Heart left ventricle (tissue), 16 donors: ENCODE measurements at regions of chr4 and their contacts with region 1.

Region 1: DNA sequence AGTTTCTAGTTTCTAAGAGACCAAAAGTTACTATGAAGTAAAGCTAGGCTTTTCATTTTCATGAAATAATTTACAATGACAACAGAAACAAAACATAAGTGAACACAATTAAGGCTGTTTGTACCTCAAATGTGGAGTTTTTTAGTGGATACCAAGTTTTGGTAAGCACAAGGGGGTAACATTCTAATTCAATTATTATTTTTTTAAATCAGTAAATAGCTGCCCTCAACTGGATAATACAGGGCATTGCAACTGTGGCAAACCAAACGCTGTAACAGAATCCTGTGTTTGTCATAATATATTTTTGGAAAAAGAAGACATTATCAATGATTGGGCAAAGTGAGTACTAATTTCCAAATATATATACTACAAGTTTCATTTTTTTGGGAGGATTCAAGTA is 150.3 kb downstream of the FBXW7 start:
- DNase-seq: no peak
- ATAC-seq: peak in 1 of 4 donors; percentile 18
- H3K4me3 ChIP-seq: no peak overlapping the region
- H3K27ac ChIP-seq: no peak overlapping the region
- H3K4me1 ChIP-seq: peaks cover 0 to 21% (median 5%) of the 10 kb centered on the region in 12 donors
- H3K27me3 ChIP-seq: no peaks in the 10 kb centered on the region
- CTCF ChIP-seq: peak; percentile 40 to 83 (median 69)
- POLR2A ChIP-seq: no peak

Region 2: GRCh38 chr4:151117371-151117962 is 1268.1 kb before region 1 on chr4:
- intact Hi-C with region 1: loop called in 2 of 10 experiments (anchors 10 kb)
- DNase-seq: peak in 3 of 5 donors; percentile 48 to 54 (median 52)
- ATAC-seq: peak; percentile 41 to 59 (median 53)
- H3K4me3 ChIP-seq: no peak overlapping the region
- H3K27ac ChIP-seq: peak overlapping the region in 5 of 12 donors; percentile 10 to 48 (median 28)
- H3K4me1 ChIP-seq: peaks cover 0 to 13% (median 0%) of the 10 kb centered on the region in 12 donors
- H3K27me3 ChIP-seq: no peaks in the 10 kb centered on the region
- CTCF ChIP-seq: peak; percentile 62 to 85 (median 74)
- POLR2A ChIP-seq: no peak

Region 3: DNA sequence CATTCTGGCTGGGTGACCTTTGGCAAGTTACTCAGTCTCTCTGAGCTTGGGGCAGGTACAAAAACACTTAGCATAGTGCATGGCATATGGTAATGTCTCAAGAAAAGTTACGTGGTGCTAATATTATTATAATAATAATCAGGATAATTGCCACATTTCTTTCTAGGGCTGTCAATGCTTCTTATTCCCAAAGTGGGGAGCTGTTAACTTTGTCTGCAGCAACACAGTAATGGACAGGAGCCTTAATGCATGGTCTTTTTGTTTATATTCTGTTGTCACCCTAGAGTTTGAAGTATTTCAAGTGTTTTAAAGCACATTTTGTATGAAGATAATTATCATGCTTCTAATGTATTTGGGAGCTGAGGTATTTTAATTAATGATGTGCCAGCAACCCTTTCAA is 854.8 kb before region 1 on chr4:
- intact Hi-C with region 1: loop called in 2 of 10 experiments (anchors 10 kb)
- DNase-seq: no peak
- ATAC-seq: no peak
- H3K4me3 ChIP-seq: no peak overlapping the region
- H3K27ac ChIP-seq: no peak overlapping the region
- H3K4me1 ChIP-seq: peaks cover 0 to 9% (median 0%) of the 10 kb centered on the region in 12 donors
- H3K27me3 ChIP-seq: no peaks in the 10 kb centered on the region
- CTCF ChIP-seq: peak in 4 of 12 donors; percentile 32 to 42 (median 36)
- POLR2A ChIP-seq: no peak

Region 4: DNA sequence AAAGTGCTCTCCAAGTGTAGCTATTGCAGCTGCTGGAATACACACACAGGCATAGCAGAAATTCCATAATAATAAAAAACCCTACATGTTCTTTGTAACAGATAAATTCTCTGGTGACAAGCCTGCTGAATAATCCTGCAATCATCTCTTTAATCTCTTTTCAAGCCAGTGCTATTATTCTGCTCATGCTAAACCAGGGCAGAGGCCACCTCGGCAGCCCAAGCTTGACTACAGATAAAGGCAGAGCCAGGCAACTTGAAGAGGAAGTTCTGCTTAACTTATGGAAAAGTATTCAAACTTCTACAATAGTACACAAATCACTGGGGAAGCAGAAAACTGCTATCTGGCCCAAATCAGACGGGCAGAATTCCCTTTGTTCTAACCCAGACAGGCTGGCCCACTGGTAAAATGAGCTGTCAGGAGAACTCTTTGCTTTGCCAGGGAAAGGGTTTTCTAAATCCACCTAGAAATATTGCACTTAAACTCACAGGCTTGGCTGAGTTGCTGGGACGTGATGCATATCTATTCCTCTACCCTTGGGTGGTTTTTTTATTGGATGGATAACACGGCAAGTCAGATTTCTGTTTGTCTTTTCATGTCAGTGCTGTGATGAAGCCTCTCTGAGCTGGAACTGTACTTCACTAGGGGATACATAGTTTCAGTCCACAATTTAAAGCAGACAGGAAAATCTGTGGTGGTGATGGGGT is 695.2 kb before region 1 on chr4:
- intact Hi-C with region 1: loop called in 1 of 10 experiments (anchors 10 kb)
- DNase-seq: no peak
- ATAC-seq: no peak
- H3K4me3 ChIP-seq: no peak overlapping the region
- H3K27ac ChIP-seq: peak overlapping the region in 10 of 12 donors; percentile 38 to 84 (median 70)
- H3K4me1 ChIP-seq: peaks cover 2 to 84% (median 57%) of the 10 kb centered on the region in 12 donors
- H3K27me3 ChIP-seq: no peaks in the 10 kb centered on the region
- CTCF ChIP-seq: no peak
- POLR2A ChIP-seq: no peak

Region 5: GRCh38 chr4:151801547-151802516 is 583.7 kb before region 1 on chr4:
- intact Hi-C with region 1: loop called in 1 of 10 experiments (anchors 5 kb)
- DNase-seq: no peak
- ATAC-seq: no peak
- H3K4me3 ChIP-seq: no peak overlapping the region
- H3K27ac ChIP-seq: peak overlapping the region in 1 of 12 donors; percentile 6
- H3K4me1 ChIP-seq: peaks cover 0 to 35% (median 3%) of the 10 kb centered on the region in 12 donors
- H3K27me3 ChIP-seq: no peaks in the 10 kb centered on the region
- CTCF ChIP-seq: peak; percentile 57 to 84 (median 72)
- POLR2A ChIP-seq: no peak